Thyroid gland (tissue), 4 donors: ENCODE measurements at regions of chr2 and their contacts with region 1.

Region 1: DNA sequence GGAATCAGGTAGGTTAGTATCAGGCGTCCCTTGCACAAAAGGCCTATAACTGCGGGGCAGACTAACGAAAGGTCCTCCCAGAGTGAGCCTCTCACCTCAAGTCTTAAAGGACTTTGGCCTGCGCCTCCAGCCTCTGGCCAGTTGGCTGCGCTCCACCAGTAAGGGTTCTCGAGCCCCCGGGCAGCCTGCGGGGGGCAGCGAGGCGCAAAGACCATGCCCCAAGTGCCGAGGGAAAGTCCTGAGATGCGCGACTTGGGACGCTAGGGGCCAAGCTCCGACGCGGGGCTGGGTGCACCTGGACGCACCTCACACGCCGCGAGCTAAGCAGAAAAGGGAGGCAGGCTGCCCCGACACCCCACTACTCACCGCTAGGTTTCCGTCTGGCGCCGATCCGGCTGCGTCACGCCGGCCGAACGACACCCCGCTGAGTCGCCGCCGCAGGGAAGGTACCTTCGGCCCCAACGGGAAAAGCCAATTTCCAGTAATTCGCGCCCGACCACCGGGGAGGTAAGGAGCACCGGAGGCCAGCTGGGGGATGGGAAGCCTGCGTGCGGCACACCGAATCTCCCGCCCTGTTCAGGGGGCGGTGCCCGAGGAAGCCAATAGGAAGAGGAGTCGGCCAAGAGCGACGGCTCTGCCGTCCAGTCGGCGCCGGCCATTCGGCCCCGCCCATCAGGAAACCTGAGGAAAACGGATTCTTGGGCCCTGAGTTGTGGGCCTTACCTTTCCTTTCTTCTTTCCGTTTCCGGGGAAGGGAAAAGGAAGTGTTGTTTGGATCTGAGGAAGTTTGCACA is at the start of gene ORC2:
- DNase-seq: peak; percentile 96 to 98
- H3K4me3 ChIP-seq: peak within 1 kb of the TSS; percentile 63 to 90 (median 78)
- H3K27ac ChIP-seq: peak within 1 kb of the TSS; percentile 72 to 82 (median 78)
- H3K4me1 ChIP-seq: peaks cover 20 to 37% of the 10 kb centered on the region in 2 donors
- H3K27me3 ChIP-seq: no peaks in the 10 kb centered on the region
- CTCF ChIP-seq: peak; percentile 15 to 71 (median 50)
- POLR2A ChIP-seq: peak; percentile 28 to 72
- total RNA-seq, gene ORC2: 25.2 to 40.3 (median 34.0) TPM

Region 2: DNA sequence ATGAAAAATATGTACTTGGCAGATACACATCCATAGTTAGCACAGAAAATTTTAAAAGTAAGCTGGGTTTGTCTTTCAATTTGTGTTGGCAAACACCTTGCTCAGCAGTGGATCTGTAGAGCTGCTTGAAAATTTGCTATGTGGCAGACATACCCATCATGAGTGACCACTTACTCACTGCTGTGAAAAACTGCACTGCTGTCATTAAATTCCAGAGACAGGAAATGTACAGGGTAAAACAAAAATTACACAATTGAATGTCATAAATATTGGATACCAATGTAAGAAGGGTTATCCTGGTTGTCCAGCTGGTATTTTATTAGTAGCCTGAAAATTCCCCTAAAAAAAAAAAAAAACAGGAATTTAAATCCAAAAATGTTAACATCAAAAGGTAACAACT is 49.7 kb before region 1 on chr2:
- intact Hi-C with region 1: loop called (anchors 10 kb)
- DNase-seq: no peak
- H3K4me3 ChIP-seq: no peak overlapping the region
- H3K27ac ChIP-seq: no peak overlapping the region
- H3K4me1 ChIP-seq: no peaks in the 10 kb centered on the region
- H3K27me3 ChIP-seq: no peaks in the 10 kb centered on the region
- CTCF ChIP-seq: no peak
- POLR2A ChIP-seq: no peak

Region 3: GRCh38 chr2:201064797-201065329 is 101.5 kb after region 1 on chr2:
- intact Hi-C with region 1: loop called (anchors 5 kb)
- DNase-seq: no peak
- H3K4me3 ChIP-seq: no peak overlapping the region
- H3K27ac ChIP-seq: no peak overlapping the region
- H3K4me1 ChIP-seq: peaks cover 5 to 11% of the 10 kb centered on the region in 2 donors
- H3K27me3 ChIP-seq: no peaks in the 10 kb centered on the region
- CTCF ChIP-seq: no peak
- POLR2A ChIP-seq: no peak

Region 4: GRCh38 chr2:201363857-201364560 is 400.7 kb after region 1 on chr2:
- intact Hi-C with region 1: no loop called
- DNase-seq: peak in 1 of 2 donors; percentile 12
- H3K4me3 ChIP-seq: no peak overlapping the region
- H3K27ac ChIP-seq: no peak overlapping the region
- H3K4me1 ChIP-seq: peaks cover 0 to 4% of the 10 kb centered on the region in 2 donors
- H3K27me3 ChIP-seq: no peaks in the 10 kb centered on the region
- CTCF ChIP-seq: peak; percentile 47 to 83 (median 76)
- POLR2A ChIP-seq: no peak